ENCODE measurements at regions of chr22 and their contacts with region 1.

Region 1: DNA sequence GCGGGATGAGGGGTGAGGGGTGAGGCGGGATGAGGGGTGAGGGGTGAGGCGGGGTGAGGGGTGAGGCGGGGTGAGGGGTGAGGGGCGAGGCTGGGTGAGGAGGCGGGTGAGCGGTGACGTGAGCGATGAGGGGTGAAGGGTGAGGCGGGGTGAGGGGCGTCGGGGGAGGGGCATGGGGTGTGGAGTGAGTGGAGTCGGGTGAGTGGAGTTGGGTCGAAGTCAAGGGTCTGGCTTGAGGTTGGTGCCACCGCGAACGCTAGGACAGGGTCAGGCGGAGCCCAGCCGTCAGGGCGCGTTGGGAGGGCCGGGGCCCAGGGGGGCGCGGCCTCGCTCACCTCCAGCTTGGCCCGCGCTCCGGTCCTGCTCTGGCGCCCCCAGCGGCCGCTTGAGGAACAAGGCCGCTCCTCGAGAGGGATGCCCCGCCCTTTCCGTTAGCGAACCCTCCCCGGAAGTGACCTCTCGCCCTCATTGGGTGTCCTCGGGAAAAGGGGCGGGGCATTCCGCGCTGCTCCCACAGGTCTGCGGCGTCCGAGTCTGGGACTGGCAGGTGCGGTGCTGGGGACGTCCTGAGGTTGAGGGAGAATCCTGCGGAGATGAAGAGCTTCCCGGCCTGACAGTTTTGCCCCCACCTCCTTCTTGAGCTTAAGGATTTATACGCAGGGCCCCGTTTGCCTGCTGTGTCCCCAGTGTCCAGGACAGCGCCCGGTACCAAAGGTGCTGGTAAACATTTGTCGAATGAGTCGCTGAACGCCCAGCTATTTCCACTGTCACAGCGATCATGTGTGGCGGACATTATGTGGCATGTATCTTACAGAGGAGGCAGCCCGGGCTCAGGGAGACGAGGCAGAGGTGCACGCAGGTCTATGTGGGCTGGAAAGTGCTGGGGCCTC is at the start of gene SYCE3:
- DNase-seq: peak; percentile 97
- H3K4me3 ChIP-seq: peak within 1 kb of the TSS; percentile 62 to 96
- H3K27ac ChIP-seq: no peak within 1 kb of the TSS; a peak in 2 of 4 replicates
- H3K4me1 ChIP-seq: peaks cover 0 to 4% of the 10 kb centered on the region in 2 experiments; a peak in 1 of 4 replicates
- H3K27me3 ChIP-seq: no peaks in the 10 kb centered on the region
- CTCF ChIP-seq: peak; percentile 79
- EP300 ChIP-seq: no peak
- RAD21 ChIP-seq: peak; percentile 65
- polyA plus RNA-seq, gene SYCE3: 2.1 and 3.6 TPM in 2 replicates

Region 2: GRCh38 chr22:50507991-50508884 is 54.5 kb before region 1 on chr22 and contains the start of gene NCAPH2:
- CTCF ChIA-PET with region 1: interaction called, 14 read pairs
- POLR2A ChIA-PET with region 1: no interaction called
- DNase-seq: peak; percentile 100
- H3K4me3 ChIP-seq: peak within 1 kb of the TSS; percentile 81 to 85
- H3K27ac ChIP-seq: peak within 1 kb of the TSS; percentile 75 to 83
- H3K4me1 ChIP-seq: peaks cover 7 to 14% of the 10 kb centered on the region in 2 experiments; a peak in 3 of 4 replicates
- H3K27me3 ChIP-seq: no peaks in the 10 kb centered on the region
- CTCF ChIP-seq: no peak
- EP300 ChIP-seq: peak in 1 of 2 experiments; percentile 36; a peak in 1 of 4 replicates
- RAD21 ChIP-seq: no peak
- polyA plus RNA-seq, gene NCAPH2: 21.1 and 22.4 TPM in 2 replicates

Region 3: DNA sequence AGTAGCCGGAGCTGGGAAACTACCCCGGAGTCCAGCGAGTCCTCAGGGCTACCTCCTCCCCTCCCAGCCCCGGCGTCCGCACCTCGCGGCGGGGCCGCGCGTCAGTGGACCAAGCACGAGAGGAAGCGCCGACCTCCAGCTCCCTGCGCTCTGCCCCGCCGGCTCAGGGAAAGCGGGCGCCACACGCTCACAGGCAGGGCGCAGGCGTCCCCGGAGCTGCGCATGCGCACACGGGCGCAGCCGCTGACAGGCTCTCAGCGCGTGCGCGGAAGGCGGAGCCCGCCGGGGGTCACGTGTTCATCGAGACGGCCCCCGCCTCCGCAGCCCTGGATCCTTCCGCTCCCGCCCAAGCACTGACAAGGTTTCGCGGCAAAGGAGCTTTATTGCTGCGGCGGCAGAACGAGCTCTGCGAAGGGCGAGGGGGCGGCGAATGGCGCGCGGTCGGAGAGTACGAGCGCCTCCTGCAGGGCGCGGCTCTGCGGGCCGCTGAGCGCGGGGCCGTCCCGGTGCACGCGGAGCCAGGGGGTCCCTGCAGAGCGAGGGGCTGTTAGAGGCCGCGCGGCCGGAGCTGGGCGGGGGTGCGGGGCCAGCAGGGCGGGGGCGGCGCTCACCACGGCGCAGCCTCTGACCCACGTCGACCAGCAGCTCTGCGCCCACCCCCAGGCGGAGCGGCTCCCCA is 37.2 kb before region 1 on chr22 and contains the start of gene SCO2:
- CTCF ChIA-PET with region 1: interaction called, 53 read pairs
- POLR2A ChIA-PET with region 1: interaction called, 12 read pairs
- DNase-seq: peak; percentile 100
- H3K4me3 ChIP-seq: peak within 1 kb of the TSS; percentile 80 to 81
- H3K27ac ChIP-seq: peak within 1 kb of the TSS; percentile 68 to 93
- H3K4me1 ChIP-seq: peaks cover 7 to 24% of the 10 kb centered on the region in 2 experiments; a peak in 2 of 4 replicates
- H3K27me3 ChIP-seq: no peaks in the 10 kb centered on the region
- CTCF ChIP-seq: peak; percentile 50
- EP300 ChIP-seq: no peak
- RAD21 ChIP-seq: peak; percentile 36; the same call in 1 of the 2 replicates
- polyA plus RNA-seq, gene SCO2: 3.2 and 4.0 TPM in 2 replicates

Region 4: DNA sequence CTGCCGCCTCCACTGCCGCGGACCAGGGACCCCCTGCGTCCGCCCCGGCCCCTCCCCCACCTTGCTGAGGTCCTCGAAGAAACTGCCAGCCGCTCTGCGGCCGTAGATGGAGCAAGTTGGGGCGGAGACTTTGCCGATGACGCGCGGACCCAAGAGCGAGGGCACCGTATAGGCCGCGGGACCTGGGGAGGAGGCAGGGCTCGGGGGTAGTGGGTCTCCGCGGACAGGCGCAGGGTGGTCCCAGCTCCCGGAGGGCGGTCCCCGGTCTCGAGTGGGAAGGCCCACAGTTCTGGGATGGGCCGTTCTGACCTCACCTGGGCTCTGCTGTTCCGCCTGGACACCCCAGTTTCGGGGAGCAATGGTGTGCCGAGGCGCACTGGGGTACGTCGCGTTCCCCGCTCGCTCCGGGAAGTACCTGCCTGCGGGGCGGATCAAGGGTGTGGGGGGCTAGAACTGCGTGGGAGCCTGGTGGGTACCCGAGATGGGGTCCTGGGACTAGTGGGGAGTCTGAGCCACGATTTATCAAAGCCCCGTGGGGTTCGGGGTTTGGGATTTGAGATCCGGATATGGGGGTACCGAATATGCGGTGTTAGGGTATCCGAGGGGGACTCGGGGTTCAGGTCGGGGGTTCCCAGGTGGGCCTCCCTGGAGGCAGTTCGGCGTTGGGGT is 31.8 kb before region 1 on chr22:
- CTCF ChIA-PET with region 1: interaction called, 53 read pairs
- POLR2A ChIA-PET with region 1: interaction called, 12 read pairs
- DNase-seq: no peak
- H3K4me3 ChIP-seq: peak overlapping the region; percentile 54 to 59; a peak in 3 of 4 replicates
- H3K27ac ChIP-seq: no peak overlapping the region; a peak in 1 of 4 replicates
- H3K4me1 ChIP-seq: peaks cover 0 to 21% of the 10 kb centered on the region in 2 experiments; a peak in 1 of 4 replicates
- H3K27me3 ChIP-seq: no peaks in the 10 kb centered on the region
- CTCF ChIP-seq: no peak
- EP300 ChIP-seq: no peak
- RAD21 ChIP-seq: no peak

Region 5: DNA sequence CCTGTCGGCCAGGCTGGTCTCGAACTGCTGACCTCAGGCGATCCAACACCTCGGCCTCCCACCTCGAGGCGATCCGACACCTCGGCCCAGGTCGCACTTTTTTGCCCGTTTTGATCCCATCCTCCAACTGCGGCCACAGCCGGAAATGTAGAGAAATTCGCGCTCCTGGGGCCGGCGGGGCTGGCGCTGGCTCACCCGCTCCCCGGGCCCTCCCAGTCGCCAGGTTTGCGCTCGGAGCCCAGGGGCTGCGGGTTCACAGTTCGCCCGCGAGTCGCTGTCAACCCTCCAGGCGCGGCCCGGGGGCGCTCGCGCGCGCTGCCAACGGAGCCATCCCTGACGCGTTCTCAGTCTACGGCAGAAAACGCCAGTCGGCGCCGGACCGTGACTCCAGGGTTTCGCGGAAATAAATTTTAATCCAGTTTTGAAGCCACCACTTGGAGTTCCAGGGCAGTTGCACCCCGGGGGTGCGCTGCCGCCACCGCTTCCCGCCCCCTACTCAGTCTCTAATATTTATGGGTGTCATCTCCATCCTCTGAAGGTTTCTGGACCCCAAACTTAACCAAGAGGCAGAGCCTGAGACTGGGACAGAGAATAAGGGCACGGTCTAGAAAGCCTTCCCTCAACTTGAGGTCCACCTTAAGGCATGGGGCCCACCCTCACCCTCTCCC is 18.6 kb before region 1 on chr22:
- CTCF ChIA-PET with region 1: interaction called, 31 read pairs
- POLR2A ChIA-PET with region 1: interaction called, 5 read pairs
- DNase-seq: peak; percentile 83
- H3K4me3 ChIP-seq: no peak overlapping the region
- H3K27ac ChIP-seq: no peak overlapping the region
- H3K4me1 ChIP-seq: peaks cover 6 to 9% of the 10 kb centered on the region in 2 experiments; a peak in 2 of 4 replicates
- H3K27me3 ChIP-seq: no peaks in the 10 kb centered on the region
- CTCF ChIP-seq: no peak
- EP300 ChIP-seq: no peak
- RAD21 ChIP-seq: no peak

Region 6: GRCh38 chr22:50576070-50576469 is 13.3 kb after region 1 on chr22:
- CTCF ChIA-PET with region 1: interaction called, 73 read pairs
- POLR2A ChIA-PET with region 1: interaction called, 7 read pairs
- DNase-seq: peak; percentile 64
- H3K4me3 ChIP-seq: no peak overlapping the region; a peak in 1 of 4 replicates
- H3K27ac ChIP-seq: no peak overlapping the region
- H3K4me1 ChIP-seq: peaks cover 0 to under 1% of the 10 kb centered on the region in 2 experiments; a peak in 1 of 4 replicates
- H3K27me3 ChIP-seq: no peaks in the 10 kb centered on the region
- CTCF ChIP-seq: peak; percentile 42
- EP300 ChIP-seq: no peak
- RAD21 ChIP-seq: peak; percentile 63

Region 7: DNA sequence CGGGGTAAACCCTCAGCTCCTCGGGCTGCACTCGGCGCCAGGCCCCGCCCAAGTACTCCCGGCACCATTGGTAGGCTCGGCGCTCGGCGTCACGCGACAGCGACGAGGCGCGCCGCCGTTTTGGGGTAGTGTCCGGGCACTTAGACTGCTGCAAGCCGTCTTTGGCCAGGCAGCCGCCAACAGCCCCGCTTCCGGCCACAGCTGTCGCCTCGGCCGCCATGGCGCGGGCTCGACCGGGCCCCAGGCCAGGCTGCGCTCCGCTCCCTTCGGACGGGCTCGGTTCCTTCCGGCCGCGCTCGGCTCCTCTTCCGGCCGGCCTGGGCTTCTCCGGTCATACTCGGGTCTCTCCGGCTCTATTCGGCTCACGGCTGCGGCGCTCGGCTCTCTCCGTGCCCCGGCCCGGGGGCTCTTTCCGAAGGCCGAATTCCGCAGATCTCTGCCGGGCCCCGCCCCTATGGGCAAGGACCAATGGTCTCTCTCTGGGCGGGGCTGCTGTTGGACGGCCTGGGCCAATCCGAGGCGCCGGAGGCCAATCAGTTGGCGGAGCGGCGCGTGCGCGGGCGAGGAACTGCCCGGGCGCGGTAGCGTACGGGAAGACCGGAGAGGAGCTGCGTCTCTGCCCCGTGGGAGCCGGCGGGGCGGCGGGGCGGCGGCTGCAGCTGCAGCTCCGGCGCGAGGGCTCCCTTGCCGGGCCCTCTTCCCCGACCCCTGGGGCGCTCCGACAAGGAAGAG is 20.0 kb after region 1 on chr22 and contains the start of gene CHKB:
- CTCF ChIA-PET with region 1: interaction called, 73 read pairs
- POLR2A ChIA-PET with region 1: interaction called, 4 read pairs
- DNase-seq: peak; percentile 99
- H3K4me3 ChIP-seq: peak within 1 kb of the TSS; percentile 89 to 94
- H3K27ac ChIP-seq: peak within 1 kb of the TSS; percentile 83 to 96; a peak in 3 of 4 replicates
- H3K4me1 ChIP-seq: peaks cover 0 to 14% of the 10 kb centered on the region in 2 experiments; a peak in 1 of 4 replicates
- H3K27me3 ChIP-seq: no peaks in the 10 kb centered on the region
- CTCF ChIP-seq: no peak
- EP300 ChIP-seq: no peak
- RAD21 ChIP-seq: no peak
- polyA plus RNA-seq, gene CHKB: 39.6 and 57.4 TPM in 2 replicates